Left cardiac atrium (tissue), 4 donors: ENCODE measurements at regions of chr5 and their contacts with region 1.

Region 1: DNA sequence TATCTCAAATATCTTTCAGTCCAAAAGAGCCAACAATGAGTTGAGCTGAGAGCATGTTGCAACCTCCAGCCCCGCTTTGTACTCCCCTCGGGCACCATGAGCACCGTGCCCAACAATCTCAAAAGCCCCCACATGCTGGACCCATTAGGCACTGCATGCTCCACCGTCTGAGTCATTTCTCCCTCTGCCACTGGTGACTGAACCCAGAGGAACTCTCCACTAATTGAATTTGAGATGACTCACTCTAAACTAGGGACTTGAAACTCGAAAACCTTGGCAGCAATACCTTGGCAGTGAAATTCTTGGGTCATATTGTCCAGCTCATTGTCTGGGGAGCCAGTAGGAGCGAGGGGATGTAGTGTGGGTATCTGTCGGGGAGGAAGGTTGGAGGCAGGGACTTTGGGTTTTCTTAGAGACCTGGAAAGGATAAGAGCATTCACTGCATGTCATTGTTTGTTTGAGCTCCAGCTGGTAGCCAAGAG is 49.9 kb upstream of the SLIT3 start:
- DNase-seq: peak; percentile 34
- ATAC-seq: peak; percentile 86 to 96

Region 2: DNA sequence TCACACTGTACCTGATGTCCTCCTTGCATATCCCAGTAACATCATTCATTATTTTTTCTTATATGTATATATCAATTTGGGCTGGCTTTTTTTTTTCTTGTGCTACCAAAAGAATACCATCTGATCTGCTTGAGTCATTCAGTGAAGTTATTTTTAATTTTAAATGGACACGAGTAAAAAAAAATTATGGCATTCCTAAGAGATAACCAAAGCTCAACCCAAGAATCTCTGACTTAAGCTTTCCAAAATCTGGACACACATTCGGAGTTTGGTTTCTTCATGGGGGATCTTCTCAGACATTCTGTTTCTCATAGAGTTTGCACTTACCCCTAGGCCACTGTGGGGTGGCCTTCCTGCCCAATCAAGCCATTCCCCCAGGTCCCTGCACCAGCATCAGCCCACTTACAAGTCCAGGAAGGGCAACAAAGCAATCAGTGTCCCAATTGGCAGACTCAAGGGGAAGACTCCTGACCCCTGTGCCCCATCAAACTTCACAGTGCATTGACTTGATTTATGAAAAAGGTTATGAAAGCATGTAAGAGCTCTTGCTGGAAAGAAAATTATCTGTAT is 183.6 kb after region 1 on chr5:
- intact Hi-C with region 1: loop called in 1 of 2 experiments (anchors 10 kb)
- DNase-seq: no peak
- ATAC-seq: peak in 1 of 2 donors; percentile 19

Region 3: GRCh38 chr5:170404402-170404801 is 1053.6 kb after region 1 on chr5:
- intact Hi-C with region 1: no loop called
- DNase-seq: no peak
- ATAC-seq: peak in 1 of 2 donors; percentile 38